ENCODE measurements at regions of chr4 and their contacts with region 1.

Region 1: DNA sequence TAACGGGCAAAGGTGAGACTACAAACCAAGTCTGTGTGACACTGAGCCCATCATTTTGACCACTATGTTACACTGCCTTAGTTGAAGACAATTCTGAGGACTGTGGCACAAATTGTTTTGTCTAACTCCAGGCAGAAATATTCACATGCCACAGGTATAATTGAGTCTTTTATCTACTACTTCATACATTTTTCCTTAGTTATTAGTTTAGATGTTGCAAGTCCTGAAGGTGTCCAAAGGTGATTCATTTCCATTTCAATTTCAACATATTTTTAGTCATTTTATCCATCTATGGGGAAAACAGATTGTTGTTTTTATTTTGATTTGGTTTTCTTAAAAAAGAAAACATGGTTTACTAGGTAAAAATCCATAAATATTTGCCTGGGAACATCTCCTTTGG is 341.7 kb upstream of the SMIM31 start:
- DNase-seq: no peak
- H3K4me3 ChIP-seq: no peak overlapping the region
- H3K27ac ChIP-seq: no peak overlapping the region
- H3K4me1 ChIP-seq: no peaks in the 10 kb centered on the region
- H3K27me3 ChIP-seq: no peaks in the 10 kb centered on the region
- CTCF ChIP-seq: no peak

Region 2: DNA sequence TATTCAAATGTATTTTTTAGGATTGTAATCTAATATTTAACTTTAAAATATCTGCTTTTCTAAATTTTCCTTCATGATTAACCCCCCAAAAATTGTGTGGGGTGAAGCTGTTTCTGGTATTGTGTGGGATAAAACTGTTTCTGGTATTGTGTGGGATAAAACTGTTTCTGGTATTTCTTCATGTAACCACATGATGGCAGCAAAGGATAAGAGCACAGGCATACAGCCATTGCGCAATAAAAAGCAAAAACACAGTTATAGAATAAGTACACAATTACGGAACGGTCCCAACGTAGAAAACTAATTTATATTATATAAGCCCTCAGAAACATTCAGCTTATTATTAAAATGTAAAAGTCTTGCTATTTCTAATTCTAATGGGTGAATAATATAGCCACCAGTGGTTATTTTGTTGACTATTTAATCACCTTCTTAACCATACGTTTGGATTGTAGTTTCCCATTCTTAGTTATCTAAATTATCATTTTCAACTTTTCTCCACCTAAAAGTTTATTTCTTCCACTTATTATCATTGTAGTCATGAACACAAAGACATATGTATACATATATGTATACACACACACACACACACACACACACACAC is 1914.6 kb before region 1 on chr4:
- CTCF ChIA-PET with region 1: no interaction called
- dilution Hi-C with region 1: no loop called
- in situ Hi-C with region 1: no loop called
- intact Hi-C with region 1: loop called (anchors 10 kb)
- DNase-seq: peak; percentile 25
- H3K4me3 ChIP-seq: no peak overlapping the region
- H3K27ac ChIP-seq: no peak overlapping the region
- H3K4me1 ChIP-seq: no peaks in the 10 kb centered on the region
- H3K27me3 ChIP-seq: no peaks in the 10 kb centered on the region
- CTCF ChIP-seq: peak; percentile 46 to 82

Region 3: DNA sequence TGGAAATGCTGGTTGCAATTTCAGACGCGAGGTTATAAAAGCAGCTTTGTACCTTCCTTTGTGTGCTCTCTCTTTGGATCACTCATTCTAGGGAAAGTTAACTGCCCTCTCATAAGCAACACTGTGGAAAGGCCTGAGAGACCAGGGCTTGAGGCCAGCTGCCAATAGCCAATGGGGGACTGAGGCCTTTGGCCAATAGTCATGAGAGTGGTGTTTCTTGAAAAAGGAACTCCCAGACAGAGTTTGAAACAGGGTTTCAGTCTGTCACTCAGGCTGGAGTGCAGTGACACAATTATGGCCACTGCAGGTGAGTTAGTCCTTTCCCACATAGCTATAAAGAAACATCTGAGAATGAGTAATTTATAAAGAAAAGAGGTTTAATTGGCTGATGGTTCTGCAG is 183.0 kb before region 1 on chr4:
- CTCF ChIA-PET with region 1: no interaction called
- dilution Hi-C with region 1: no loop called
- in situ Hi-C with region 1: no loop called
- intact Hi-C with region 1: no loop called
- DNase-seq: no peak
- H3K4me3 ChIP-seq: no peak overlapping the region
- H3K27ac ChIP-seq: no peak overlapping the region
- H3K4me1 ChIP-seq: no peaks in the 10 kb centered on the region
- H3K27me3 ChIP-seq: no peaks in the 10 kb centered on the region
- CTCF ChIP-seq: no peak

Region 4: GRCh38 chr4:164467493-164467892 is 55.2 kb after region 1 on chr4:
- CTCF ChIA-PET with region 1: no interaction called
- dilution Hi-C with region 1: loop called (anchors 5 kb)
- in situ Hi-C with region 1: no loop called
- intact Hi-C with region 1: no loop called
- DNase-seq: peak; percentile 56
- H3K4me3 ChIP-seq: no peak overlapping the region
- H3K27ac ChIP-seq: no peak overlapping the region
- H3K4me1 ChIP-seq: no peaks in the 10 kb centered on the region
- H3K27me3 ChIP-seq: no peaks in the 10 kb centered on the region
- CTCF ChIP-seq: no peak

Region 5: DNA sequence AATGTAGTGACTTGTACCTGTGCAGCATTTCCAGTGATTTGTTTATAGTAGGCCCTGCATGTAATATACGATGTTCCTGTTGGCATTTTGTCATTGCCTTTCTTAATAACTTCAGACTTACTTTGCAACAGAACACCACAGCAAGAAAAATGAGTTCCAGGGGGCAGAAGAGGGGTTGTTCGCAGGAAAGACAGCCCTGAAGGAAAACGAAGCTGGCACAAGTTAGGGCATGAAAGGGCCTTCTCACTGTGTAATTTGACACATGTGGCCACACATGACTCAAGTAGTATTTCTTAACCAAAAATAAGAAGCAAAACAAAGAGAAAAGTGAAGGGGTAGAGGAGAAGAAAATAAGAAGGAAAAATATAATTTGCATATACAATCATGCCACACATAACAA is 75.9 kb after region 1 on chr4:
- CTCF ChIA-PET with region 1: no interaction called
- dilution Hi-C with region 1: loop called (anchors 5 kb)
- in situ Hi-C with region 1: no loop called
- intact Hi-C with region 1: no loop called
- DNase-seq: peak; percentile 75
- H3K4me3 ChIP-seq: no peak overlapping the region
- H3K27ac ChIP-seq: no peak overlapping the region
- H3K4me1 ChIP-seq: peaks cover 16% of the 10 kb centered on the region
- H3K27me3 ChIP-seq: no peaks in the 10 kb centered on the region
- CTCF ChIP-seq: no peak